ENCODE measurements at regions of chr10 and their contacts with region 1.

Region 1: GRCh38 chr10:70221030-70221429 is 12.2 kb downstream of the PPA1 start:
- DNase-seq: no peak
- H3K4me3 Mint-ChIP-seq: peak overlapping the region; percentile 44
- H3K27ac Mint-ChIP-seq: peak overlapping the region; percentile 87
- H3K4me1 Mint-ChIP-seq: peaks cover 41% of the 10 kb centered on the region
- H3K27me3 Mint-ChIP-seq: no peaks in the 10 kb centered on the region
- CTCF ChIP-seq: no peak

Region 2: DNA sequence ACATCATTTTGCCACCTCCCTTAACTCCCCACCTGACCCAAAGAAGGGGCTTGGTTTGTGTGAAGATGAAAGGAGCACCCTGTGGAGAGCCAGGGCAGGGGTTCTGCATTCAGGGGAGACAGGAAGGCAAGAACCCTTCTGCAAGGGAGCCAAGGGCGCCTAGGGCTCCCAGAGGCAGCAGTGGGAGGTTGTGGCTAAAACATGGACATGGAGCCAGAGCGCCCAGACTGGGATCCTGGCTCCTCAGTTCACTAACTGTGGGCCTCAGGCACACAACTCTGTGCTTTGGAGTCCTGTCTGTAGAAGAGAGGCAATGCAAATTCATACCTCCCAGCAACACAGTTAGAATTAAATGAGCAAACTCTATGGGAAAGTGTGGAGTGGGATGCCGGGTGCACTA is 291.5 kb before region 1 on chr10:
- CTCF ChIA-PET with region 1: no interaction called
- intact Hi-C with region 1: no loop called
- DNase-seq: no peak
- H3K4me3 Mint-ChIP-seq: no peak overlapping the region
- H3K27ac Mint-ChIP-seq: no peak overlapping the region
- H3K4me1 Mint-ChIP-seq: no peaks in the 10 kb centered on the region
- H3K27me3 Mint-ChIP-seq: peaks cover 97% of the 10 kb centered on the region
- CTCF ChIP-seq: no peak

Region 3: DNA sequence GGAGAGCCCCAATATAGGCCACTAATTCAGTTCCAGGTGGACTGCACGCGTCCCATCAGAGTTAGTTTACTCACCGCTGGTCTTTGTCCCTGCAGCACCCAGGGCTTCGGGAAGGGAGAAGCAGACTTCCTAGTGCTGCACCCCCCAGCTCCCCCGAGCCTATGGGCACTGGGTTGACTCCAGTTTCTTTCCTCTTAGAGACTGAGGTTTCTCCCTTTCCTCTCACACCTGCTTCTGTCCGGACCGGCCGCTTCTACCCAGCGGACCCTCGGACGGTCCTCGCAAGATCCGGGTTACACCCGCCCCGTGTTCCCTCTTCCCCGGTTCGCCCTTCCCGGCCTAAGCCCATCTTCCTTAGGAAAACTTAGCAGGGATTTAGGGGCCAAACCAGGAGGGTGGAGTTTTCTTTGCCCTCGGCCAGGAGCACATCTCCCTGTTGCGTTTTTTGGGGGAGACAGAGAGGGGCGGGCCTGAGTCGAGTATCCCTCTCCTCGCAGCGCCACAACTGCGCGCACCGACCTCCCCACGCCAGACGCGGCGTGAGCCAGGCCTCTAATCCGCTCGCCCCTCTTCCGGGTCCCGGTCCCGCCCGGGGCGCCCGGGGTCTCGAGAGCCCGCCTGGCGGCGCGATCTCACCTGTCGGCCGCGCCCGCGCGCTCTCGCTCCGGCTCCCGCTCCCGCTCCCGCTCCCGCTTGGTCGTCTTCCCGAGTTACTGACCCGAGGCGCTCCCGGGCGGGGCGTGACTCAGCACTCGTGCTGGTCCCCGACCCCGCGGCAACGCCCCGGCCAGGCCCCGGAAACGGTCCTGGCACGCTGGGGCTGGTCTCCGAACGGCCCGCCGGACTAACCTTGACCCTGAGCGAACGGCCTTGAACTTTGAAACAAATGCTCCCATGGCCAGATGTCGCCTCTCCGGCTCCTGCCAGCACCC is 88.7 kb before region 1 on chr10 and contains the start of gene AIFM2:
- CTCF ChIA-PET with region 1: no interaction called
- intact Hi-C with region 1: no loop called
- DNase-seq: peak; percentile 87
- H3K4me3 Mint-ChIP-seq: peak within 1 kb of the TSS; percentile 98
- H3K27ac Mint-ChIP-seq: peak within 1 kb of the TSS; percentile 91
- H3K4me1 Mint-ChIP-seq: peaks cover 36% of the 10 kb centered on the region
- H3K27me3 Mint-ChIP-seq: no peaks in the 10 kb centered on the region
- CTCF ChIP-seq: no peak
- total RNA-seq, gene AIFM2: 20.6 and 21.1 TPM in 2 replicates

Region 4: DNA sequence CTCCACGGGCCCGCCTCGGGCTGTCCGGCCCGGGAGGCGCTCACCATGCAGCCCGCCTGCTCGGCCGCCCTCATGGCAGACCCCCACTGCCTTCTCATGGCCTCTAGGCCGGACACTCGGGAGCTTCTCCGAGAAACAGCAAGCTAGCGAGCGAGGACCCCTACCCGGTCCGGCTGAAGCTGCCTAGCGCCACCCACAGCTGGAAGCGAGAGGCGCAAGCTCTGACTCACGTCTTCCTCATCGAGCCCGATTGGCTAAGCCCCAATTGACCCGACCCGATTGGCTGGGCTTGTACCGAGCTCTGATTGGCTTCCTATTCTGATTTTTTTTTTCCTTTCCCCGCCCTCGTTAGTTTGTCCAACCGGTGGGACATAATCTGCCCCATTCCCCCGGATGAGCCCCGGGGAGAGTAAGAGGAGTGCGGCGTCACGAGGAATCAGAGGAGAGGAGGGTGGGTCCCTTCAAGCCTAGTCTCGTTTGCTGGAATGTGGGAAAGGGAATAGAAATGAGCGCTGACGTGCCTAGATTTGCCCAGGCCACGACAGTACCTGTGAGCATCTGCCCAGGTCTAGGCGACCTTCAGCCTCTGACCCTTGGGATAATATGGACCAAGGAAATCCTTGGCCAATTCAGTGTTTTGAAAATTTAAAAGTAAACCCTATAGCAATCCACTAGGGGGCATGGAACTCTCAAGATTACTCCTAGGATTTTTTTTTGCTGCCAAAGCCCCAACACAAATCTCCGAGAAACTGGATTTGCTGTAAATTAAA is 74.4 kb before region 1 on chr10 and contains the start of gene TYSND1:
- CTCF ChIA-PET with region 1: interaction called, 16 read pairs
- intact Hi-C with region 1: no loop called
- DNase-seq: peak; percentile 98
- H3K4me3 Mint-ChIP-seq: peak within 1 kb of the TSS; percentile 86
- H3K27ac Mint-ChIP-seq: peak within 1 kb of the TSS; percentile 91
- H3K4me1 Mint-ChIP-seq: peaks cover 8% of the 10 kb centered on the region
- H3K27me3 Mint-ChIP-seq: no peaks in the 10 kb centered on the region
- CTCF ChIP-seq: peak; percentile 12
- total RNA-seq, gene TYSND1: 21.4 and 24.6 TPM in 2 replicates

Region 5: DNA sequence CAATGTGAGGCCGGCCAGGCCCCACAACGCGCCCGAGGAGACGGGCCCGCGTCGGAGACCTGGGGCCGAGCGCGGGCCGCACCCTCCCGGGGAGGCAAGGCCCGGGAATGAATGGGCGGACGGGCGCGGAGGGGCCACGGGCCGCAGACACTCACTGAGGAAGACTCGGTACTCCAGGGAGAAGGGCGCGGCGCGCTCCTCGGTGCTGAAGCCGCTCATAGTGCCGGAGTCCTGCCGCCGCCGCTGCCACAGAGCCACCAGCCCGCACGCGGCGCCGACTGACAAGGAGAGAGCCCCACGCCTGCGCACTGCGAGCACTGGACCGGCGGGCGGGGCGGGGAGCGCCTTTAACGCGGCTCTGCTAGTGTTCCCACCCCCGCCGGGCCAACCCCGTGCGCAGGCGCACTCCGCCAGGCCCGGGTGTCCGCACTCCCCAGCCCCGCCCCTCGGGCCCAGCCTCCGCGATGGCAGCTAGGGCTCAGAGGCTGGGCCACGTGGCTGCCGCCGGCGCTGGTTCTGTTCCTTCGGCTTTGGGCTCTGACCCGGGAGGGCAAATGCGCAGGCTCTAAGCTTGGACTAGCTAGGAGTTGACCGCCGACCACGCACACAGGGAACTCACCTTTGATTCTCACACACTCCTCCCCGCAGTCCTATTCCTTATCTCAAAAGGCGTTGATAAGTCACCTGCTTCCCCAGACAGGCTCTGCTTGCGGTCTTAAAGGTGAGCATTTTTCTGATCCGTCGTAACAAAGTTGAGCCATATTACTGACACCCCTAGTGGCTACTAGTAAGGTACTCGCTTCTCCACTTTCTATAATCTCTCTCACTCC is 12.3 kb after region 1 on chr10 and contains the start of gene PPA1:
- CTCF ChIA-PET with region 1: interaction called, 26 read pairs
- intact Hi-C with region 1: no loop called
- DNase-seq: peak; percentile 100
- H3K4me3 Mint-ChIP-seq: peak within 1 kb of the TSS; percentile 75
- H3K27ac Mint-ChIP-seq: peak within 1 kb of the TSS; percentile 97
- H3K4me1 Mint-ChIP-seq: peaks cover 7% of the 10 kb centered on the region
- H3K27me3 Mint-ChIP-seq: no peaks in the 10 kb centered on the region
- CTCF ChIP-seq: no peak
- total RNA-seq, gene PPA1: 260 and 280 TPM in 2 replicates

Region 6: GRCh38 chr10:70267161-70267933 is 46.3 kb after region 1 on chr10:
- CTCF ChIA-PET with region 1: interaction called, 35 read pairs
- intact Hi-C with region 1: no loop called
- DNase-seq: peak; percentile 56
- H3K4me3 Mint-ChIP-seq: no peak overlapping the region
- H3K27ac Mint-ChIP-seq: peak overlapping the region; percentile 3
- H3K4me1 Mint-ChIP-seq: peaks cover 32% of the 10 kb centered on the region
- H3K27me3 Mint-ChIP-seq: no peaks in the 10 kb centered on the region
- CTCF ChIP-seq: peak; percentile 43

Region 7: GRCh38 chr10:70331486-70332268 is 110.6 kb after region 1 on chr10:
- CTCF ChIA-PET with region 1: interaction called, 10 read pairs
- intact Hi-C with region 1: no loop called
- DNase-seq: peak; percentile 81
- H3K4me3 Mint-ChIP-seq: peak overlapping the region; percentile 13
- H3K27ac Mint-ChIP-seq: peak overlapping the region; percentile 72
- H3K4me1 Mint-ChIP-seq: peaks cover 41% of the 10 kb centered on the region
- H3K27me3 Mint-ChIP-seq: no peaks in the 10 kb centered on the region
- CTCF ChIP-seq: peak; percentile 23

Region 8: GRCh38 chr10:70363971-70364771 is 143.1 kb after region 1 on chr10:
- CTCF ChIA-PET with region 1: interaction called, 145 read pairs
- intact Hi-C with region 1: loop called (anchors 1 kb)
- DNase-seq: peak; percentile 94
- H3K4me3 Mint-ChIP-seq: no peak overlapping the region
- H3K27ac Mint-ChIP-seq: peak overlapping the region; percentile 38
- H3K4me1 Mint-ChIP-seq: peaks cover 9% of the 10 kb centered on the region
- H3K27me3 Mint-ChIP-seq: no peaks in the 10 kb centered on the region
- CTCF ChIP-seq: peak; percentile 98

Measured in Calu3 (cell line).